ENCODE measurements at regions of chr6 and their contacts with region 1.

Region 1: DNA sequence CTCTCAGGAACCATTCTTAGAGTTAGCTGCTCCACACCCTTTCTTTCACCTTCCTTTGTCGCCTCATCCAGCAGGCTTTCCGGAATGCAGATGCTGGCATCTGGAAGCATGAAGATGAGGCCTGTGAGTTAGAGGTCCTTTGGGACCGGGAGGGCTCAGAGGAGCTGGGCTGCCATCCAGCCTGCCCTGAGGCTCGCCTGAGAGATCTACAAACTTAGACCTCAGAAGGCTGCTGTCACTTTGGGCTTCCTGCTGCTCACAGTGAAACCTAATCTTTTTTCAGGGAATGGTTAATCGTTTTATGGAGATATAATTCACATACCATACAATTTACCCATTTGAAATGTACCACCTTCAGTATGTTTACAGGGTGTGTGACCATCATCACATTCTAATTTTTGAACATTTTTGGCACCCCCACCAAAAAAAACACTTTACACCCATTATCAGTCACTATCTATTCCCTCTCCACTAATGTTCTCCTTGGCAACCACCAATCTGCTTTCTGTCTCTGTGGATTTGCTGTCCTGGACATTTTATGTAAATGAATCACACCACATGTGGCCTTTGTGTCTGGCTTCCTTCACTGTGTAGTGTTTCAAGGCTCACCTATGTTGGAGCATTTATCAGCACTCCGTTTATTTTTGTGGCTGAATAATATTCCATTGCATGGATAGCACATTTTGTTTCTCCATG is 20.0 kb upstream of the MPC1 start:
- DNase-seq: no peak
- ATAC-seq: no peak
- H3K4me3 Mint-ChIP-seq: no peak overlapping the region
- H3K27ac Mint-ChIP-seq: no peak overlapping the region
- H3K4me1 Mint-ChIP-seq: peaks cover 2% of the 10 kb centered on the region
- H3K27me3 Mint-ChIP-seq: peaks cover 11% of the 10 kb centered on the region

Region 2: DNA sequence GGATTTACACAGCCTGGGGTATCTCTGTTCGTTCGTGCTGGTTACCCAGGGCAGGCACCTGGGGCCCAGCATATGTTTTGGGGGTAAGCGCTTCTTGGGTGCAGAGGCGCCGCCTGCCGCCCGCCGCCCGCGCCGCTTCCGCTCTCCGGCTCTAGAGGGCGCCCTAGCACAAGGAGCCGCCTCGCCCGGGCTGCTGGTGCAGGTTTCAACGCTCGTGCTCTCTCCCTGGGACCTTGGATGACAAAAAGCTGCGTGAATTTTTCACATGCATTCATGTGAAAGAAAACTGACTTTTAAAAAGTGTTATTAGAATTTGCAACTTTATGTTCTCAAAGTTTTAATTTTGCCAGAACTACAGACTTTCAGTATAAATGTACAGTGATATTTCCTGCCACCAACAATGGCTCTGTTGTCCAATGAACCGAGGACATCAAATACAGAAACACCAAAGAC is 127.0 kb before region 1 on chr6:
- CTCF ChIA-PET with region 1: interaction called, 61 read pairs
- POLR2A ChIA-PET with region 1: no interaction called
- DNase-seq: peak; percentile 83
- ATAC-seq: peak; percentile 93
- H3K4me3 Mint-ChIP-seq: no peak overlapping the region
- H3K27ac Mint-ChIP-seq: peak overlapping the region; percentile 64
- H3K4me1 Mint-ChIP-seq: peaks cover 11% of the 10 kb centered on the region
- H3K27me3 Mint-ChIP-seq: peaks cover 14% of the 10 kb centered on the region

Region 3: DNA sequence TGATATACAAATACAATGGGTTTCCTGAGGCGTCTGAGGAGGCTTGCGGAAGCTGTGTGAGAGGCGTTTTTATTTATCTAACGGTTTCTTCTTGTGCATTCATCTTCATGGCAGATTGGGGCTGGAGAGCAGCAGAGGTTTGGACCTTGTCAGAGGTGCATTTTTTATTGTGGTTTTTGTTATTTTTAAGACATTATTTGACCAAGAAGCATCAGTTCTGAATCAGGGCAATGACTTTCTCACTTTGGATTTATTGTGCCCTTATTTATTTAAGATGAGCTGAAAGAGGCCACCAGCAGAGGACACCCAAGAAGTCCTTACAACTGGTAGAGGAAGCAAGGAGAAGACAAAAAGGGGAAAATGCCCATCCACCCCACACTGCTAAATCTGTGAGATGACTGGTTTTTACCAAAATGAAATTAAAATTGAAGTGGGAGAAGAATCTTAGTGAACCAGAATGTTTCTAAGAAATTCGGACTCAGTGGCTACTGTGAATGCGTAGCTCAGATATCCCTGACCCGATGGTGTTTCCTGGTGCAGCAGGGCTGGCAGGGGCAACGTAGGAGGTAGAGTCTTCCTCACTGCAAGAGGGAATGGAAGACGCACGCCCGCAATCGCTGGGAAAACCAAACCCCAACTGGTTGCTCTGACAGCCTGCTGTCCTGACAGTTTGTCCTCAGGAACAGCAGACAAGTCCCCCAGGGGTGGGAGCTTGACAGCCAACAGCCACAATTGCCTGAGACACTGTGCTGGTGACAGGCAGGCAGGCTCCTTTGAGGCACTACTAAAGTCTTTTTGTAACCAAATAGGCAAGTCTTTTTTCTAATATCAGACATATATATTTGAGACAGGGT is 108.8 kb before region 1 on chr6:
- CTCF ChIA-PET with region 1: interaction called, 14 read pairs
- POLR2A ChIA-PET with region 1: no interaction called
- DNase-seq: no peak
- ATAC-seq: no peak
- H3K4me3 Mint-ChIP-seq: no peak overlapping the region
- H3K27ac Mint-ChIP-seq: no peak overlapping the region
- H3K4me1 Mint-ChIP-seq: no peaks in the 10 kb centered on the region
- H3K27me3 Mint-ChIP-seq: peaks cover 46% of the 10 kb centered on the region

Region 4: DNA sequence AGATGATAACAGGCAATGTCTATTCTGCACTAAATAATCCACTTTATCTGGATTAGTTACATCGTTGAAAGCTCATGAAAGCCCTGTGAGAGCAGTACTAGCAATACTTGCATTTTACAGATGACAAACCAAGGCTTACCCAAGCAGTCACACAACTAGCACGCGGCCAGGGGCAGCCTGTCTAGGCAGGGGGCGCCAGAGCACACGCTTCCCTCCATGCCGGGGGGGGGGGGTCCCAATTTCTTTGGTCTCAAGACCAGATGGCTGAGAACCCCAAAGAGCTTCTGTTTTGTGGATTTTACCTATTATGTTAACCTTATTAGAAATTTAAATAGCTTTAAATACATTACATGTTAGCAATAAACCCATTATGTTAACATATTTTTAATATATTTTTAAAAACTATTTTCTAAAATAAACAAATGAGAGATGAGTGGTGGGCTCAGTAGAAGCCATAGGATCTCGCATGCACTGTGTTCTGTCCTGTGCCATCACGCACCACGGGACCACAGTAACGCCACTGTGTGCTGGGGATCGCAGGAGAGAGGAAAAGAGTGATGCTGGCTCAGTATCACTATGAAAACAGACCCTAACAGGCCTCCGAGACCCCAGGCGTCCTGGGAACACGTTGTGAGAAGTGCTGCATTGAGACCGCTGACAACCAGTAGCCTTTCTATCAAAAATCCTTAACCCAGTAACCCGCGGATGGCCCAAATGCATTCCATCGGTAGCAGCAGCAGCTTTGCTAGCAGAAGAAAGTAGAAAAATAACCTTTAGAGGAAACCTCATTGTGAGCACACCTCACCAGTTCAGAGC is 89.3 kb before region 1 on chr6:
- CTCF ChIA-PET with region 1: interaction called, 49 read pairs
- POLR2A ChIA-PET with region 1: no interaction called
- DNase-seq: peak; percentile 67
- ATAC-seq: peak; percentile 96
- H3K4me3 Mint-ChIP-seq: no peak overlapping the region
- H3K27ac Mint-ChIP-seq: no peak overlapping the region
- H3K4me1 Mint-ChIP-seq: peaks cover 1% of the 10 kb centered on the region
- H3K27me3 Mint-ChIP-seq: peaks cover 33% of the 10 kb centered on the region

Region 5: GRCh38 chr6:166360243-166361076 is 42.3 kb before region 1 on chr6:
- CTCF ChIA-PET with region 1: no interaction called
- POLR2A ChIA-PET with region 1: no interaction called
- DNase-seq: no peak
- ATAC-seq: no peak
- H3K4me3 Mint-ChIP-seq: no peak overlapping the region
- H3K27ac Mint-ChIP-seq: no peak overlapping the region
- H3K4me1 Mint-ChIP-seq: no peaks in the 10 kb centered on the region
- H3K27me3 Mint-ChIP-seq: peaks cover 33% of the 10 kb centered on the region

Region 6: GRCh38 chr6:166387642-166388289 is 15.0 kb before region 1 on chr6:
- CTCF ChIA-PET with region 1: interaction called, 14 read pairs
- POLR2A ChIA-PET with region 1: no interaction called
- DNase-seq: no peak
- ATAC-seq: no peak
- H3K4me3 Mint-ChIP-seq: no peak overlapping the region
- H3K27ac Mint-ChIP-seq: no peak overlapping the region
- H3K4me1 Mint-ChIP-seq: peaks cover 4% of the 10 kb centered on the region
- H3K27me3 Mint-ChIP-seq: peaks cover 7% of the 10 kb centered on the region

Region 7: GRCh38 chr6:166456395-166457156 is 53.8 kb after region 1 on chr6:
- CTCF ChIA-PET with region 1: no interaction called
- POLR2A ChIA-PET with region 1: no interaction called
- DNase-seq: no peak
- ATAC-seq: no peak
- H3K4me3 Mint-ChIP-seq: no peak overlapping the region
- H3K27ac Mint-ChIP-seq: no peak overlapping the region
- H3K4me1 Mint-ChIP-seq: no peaks in the 10 kb centered on the region
- H3K27me3 Mint-ChIP-seq: peaks cover 2% of the 10 kb centered on the region

Measured in activated CD8-positive, alpha-beta T cell treated with anti-CD3 and anti-CD28 coated beads, Interleukin-2, amount 10 ng/mL, durations not matched to agents 7 days and 5 days (primary cell).